ENCODE measurements at regions of chr6 and their contacts with region 1.

Region 1: DNA sequence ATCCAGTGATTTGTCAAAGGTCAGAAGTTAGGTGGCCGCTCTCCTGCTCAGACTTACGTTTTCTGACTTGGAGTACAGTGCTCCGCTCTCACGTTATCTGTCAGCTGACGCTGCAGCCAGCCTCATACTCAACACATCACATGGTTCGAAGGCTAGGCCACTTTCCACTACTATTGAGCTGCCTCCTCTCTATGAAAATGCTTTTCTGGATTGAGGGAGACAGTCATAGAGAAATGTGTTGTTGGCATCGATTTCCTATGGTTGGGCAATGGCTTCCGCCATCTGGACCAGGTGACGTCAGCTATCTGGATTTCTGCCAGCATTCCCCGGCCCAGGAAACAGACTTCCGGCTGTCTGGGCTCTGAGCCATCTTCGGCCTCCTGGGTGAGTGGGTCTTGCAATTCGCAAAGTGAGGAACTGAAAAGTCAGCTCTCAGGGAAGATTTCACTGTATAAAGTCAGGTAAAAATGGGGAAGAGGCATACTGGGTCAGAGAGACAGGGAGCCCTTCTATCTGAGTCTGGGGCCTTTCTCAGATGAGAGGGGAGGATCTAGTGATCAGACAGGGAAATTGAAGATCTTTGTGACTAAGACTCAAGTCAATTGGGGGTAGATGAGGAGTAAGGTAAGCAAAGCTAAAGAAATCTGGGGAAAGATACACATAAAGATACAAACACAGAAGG is 37.5 kb upstream of the IER3 start:
- DNase-seq: peak; percentile 58 to 97
- ATAC-seq: peak; percentile 91 to 95
- H3K4me3 ChIP-seq: peak overlapping the region; percentile 11; the same call in 1 of the 3 replicates
- H3K27ac ChIP-seq: peak overlapping the region; percentile 96 to 97
- H3K4me1 ChIP-seq: peaks cover 88% of the 10 kb centered on the region
- CTCF ChIP-seq: no peak
- EP300 ChIP-seq: peak; percentile 93 to 96; a peak in 4 of 5 replicates
- POLR2A ChIP-seq: no peak
- RAD21 ChIP-seq: peak in 1 of 2 experiments; percentile 51; a peak in 1 of 5 replicates

Region 2: DNA sequence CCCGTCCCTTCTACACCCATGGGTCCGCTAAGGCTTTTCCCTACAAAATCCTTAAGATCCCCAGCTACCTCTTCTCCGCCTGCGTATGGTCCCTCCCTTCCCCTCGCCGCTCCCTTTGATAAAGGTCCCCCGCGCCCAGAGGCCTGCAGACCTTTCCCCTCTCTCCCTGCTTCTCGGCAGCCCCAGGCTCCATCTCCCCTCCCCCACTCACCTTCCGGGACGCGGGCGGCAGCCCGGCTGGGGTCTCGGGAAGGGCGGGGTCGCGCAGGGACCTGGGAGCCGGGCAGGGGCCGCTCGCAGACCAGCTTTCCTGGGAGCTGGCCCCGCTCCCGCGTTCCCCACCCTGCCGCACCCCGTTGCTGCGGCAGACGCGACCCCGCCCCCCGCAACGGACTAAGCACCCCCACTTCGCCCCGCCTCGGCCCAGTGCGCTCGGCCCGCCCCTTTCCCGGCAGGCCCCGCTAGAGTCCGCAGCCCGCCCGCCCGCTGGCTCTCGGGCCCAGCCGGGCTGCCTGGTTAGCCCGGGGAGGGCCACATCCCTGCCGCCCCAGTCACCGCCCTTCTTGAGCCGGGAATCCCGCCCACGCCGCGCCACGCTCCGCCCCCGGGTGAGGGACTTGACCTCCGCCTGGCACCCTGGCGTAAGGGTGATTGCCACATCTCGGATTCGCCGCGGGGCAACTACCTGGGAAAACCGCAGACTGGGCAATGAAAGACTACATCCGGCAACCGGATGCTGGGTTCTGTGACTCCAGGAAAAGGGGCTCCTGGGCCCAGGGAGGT is 39.4 kb before region 1 on chr6 and contains the start of gene FLOT1:
- CTCF ChIA-PET with region 1: interaction called, 8 read pairs
- POLR2A ChIA-PET with region 1: interaction called, 78 read pairs
- DNase-seq: peak; percentile 64 to 94
- ATAC-seq: peak; percentile 74 to 78
- H3K4me3 ChIP-seq: peak within 1 kb of the TSS; percentile 99
- H3K27ac ChIP-seq: peak within 1 kb of the TSS; percentile 97 to 98
- H3K4me1 ChIP-seq: peaks cover 64% of the 10 kb centered on the region
- CTCF ChIP-seq: no peak
- EP300 ChIP-seq: peak; percentile 5 to 41; a peak in 2 of 5 replicates
- POLR2A ChIP-seq: peak; percentile 74
- RAD21 ChIP-seq: peak in 1 of 2 experiments; percentile 49; a peak in 3 of 5 replicates
- polyA plus RNA-seq, gene FLOT1: 135 and 136 TPM in 2 replicates

Region 3: GRCh38 chr6:30752157-30752927 is 29.5 kb before region 1 on chr6:
- CTCF ChIA-PET with region 1: interaction called, 9 read pairs
- POLR2A ChIA-PET with region 1: interaction called, 55 read pairs
- DNase-seq: peak; percentile 77 to 98
- ATAC-seq: peak; percentile 89 to 92
- H3K4me3 ChIP-seq: no peak overlapping the region
- H3K27ac ChIP-seq: peak overlapping the region; percentile 97
- H3K4me1 ChIP-seq: peaks cover 68% of the 10 kb centered on the region
- CTCF ChIP-seq: 0 out of 3 replicates have a peak, but pooled peaks have one; percentile 6
- EP300 ChIP-seq: peak; percentile 74 to 86; a peak in 2 of 5 replicates
- POLR2A ChIP-seq: no peak
- RAD21 ChIP-seq: peak; percentile 35 to 63

Region 4: GRCh38 chr6:30759575-30760239 is 22.2 kb before region 1 on chr6:
- CTCF ChIA-PET with region 1: interaction called, 4 read pairs
- POLR2A ChIA-PET with region 1: interaction called, 14 read pairs
- DNase-seq: peak; percentile 70 to 85
- ATAC-seq: peak; percentile 81 to 89
- H3K4me3 ChIP-seq: no peak overlapping the region
- H3K27ac ChIP-seq: peak overlapping the region; percentile 86 to 97
- H3K4me1 ChIP-seq: peaks cover 66% of the 10 kb centered on the region
- CTCF ChIP-seq: no peak
- EP300 ChIP-seq: peak; percentile 16 to 37; a peak in 1 of 5 replicates
- POLR2A ChIP-seq: no peak
- RAD21 ChIP-seq: no peak

Region 5: DNA sequence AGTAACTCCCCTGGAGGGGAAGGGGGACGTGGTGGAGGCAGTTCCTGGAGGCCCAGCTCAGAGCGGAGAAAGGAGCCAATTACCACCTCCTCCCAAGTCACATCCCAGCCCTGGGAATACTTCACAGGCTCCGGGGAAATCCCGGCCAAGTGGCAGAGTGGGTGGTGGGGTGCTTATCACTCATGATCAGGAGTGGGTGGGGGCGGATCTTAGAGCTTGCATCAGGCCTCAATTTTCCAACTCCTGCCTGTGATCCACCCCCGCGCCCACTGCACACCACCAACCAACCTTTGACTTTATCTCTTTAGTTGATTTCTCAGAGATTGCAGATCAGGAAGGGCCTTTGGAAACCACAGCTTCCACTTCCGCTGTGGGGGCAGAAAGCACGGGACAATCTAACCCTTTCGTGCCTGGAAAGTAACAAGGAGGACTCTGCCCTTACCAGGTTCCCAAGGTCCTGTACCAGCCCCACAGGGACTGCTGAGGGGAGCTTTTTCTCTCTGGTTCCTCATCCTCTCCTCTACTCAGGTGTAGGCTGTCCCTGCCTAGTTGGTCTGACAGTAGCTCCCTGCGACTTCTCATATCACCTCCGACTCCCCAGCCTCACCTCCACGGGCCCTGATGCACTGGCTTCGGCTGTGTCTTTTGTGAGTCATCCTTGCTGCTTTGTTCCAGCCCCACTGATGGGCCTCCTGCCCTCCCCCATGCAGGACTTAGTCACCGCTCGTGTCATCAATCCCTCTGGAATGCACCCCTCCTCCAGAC is 12.6 kb before region 1 on chr6:
- CTCF ChIA-PET with region 1: interaction called, 21 read pairs
- POLR2A ChIA-PET with region 1: interaction called, 77 read pairs
- DNase-seq: peak; percentile 93 to 94
- ATAC-seq: peak; percentile 91 to 95
- H3K4me3 ChIP-seq: peak overlapping the region; percentile 3; the same call in 1 of the 3 replicates
- H3K27ac ChIP-seq: peak overlapping the region; percentile 89 to 97
- H3K4me1 ChIP-seq: peaks cover 70% of the 10 kb centered on the region
- CTCF ChIP-seq: no peak
- EP300 ChIP-seq: peak; percentile 68 to 81; a peak in 3 of 5 replicates
- POLR2A ChIP-seq: no peak
- RAD21 ChIP-seq: peak; percentile 13 to 34; a peak in 2 of 5 replicates

Region 6: GRCh38 chr6:30821862-30822782 is 40.2 kb after region 1 on chr6:
- CTCF ChIA-PET with region 1: interaction called, 35 read pairs
- POLR2A ChIA-PET with region 1: interaction called, 20 read pairs
- DNase-seq: peak; percentile 44 to 48
- ATAC-seq: peak; percentile 46 to 61; a peak in 3 of 6 replicates
- H3K4me3 ChIP-seq: no peak overlapping the region
- H3K27ac ChIP-seq: peak overlapping the region; percentile 81 to 90
- H3K4me1 ChIP-seq: peaks cover 62% of the 10 kb centered on the region
- CTCF ChIP-seq: peak; percentile 54
- EP300 ChIP-seq: no peak
- POLR2A ChIP-seq: no peak
- RAD21 ChIP-seq: peak; percentile 35 to 43; a peak in 2 of 5 replicates

Measured in A549 (cell line).